ENCODE measurements at regions of chr14 and their contacts with region 1.

Region 1: GRCh38 chr14:68816262-68816942 is 23.5 kb upstream of the ZFP36L1 start:
- DNase-seq: peak; percentile 94
- ATAC-seq: peak; percentile 73
- H3K4me3 ChIP-seq: peak overlapping the region; percentile 51 to 80 (median 74)
- H3K4me3 Mint-ChIP-seq: peak overlapping the region; percentile 87
- H3K27ac ChIP-seq: peak overlapping the region; percentile 89 to 94
- H3K27ac Mint-ChIP-seq: peak overlapping the region; percentile 98
- H3K4me1 ChIP-seq: peaks cover 56 to 70% of the 10 kb centered on the region in 2 donors
- H3K4me1 Mint-ChIP-seq: peaks cover 82% of the 10 kb centered on the region
- H3K27me3 ChIP-seq: no peaks in the 10 kb centered on the region
- H3K27me3 Mint-ChIP-seq: no peaks in the 10 kb centered on the region
- CTCF ChIP-seq: peak; percentile 97

Region 2: DNA sequence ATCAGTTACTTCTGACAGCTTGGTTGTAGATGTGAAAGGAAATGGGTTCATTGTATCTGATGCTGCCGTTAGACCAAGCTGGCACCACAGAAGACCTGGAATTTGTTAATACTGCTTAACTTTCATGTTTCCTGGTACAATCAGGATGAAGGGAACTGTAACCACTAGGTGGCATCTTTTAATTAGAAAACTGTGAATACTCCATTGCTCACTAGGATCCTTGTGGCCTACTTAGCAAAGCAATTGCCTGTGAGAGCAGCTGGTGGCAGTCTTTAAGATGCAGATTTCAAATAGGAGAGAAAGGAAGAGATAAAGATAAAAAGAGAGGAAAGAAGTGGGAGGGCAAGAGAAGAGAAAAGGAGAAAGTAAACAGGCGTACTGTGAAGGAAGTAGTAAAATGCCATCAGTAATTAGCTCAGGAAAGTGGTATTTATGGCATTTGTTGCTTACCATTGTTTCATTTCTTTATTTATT is 882.4 kb before region 1 on chr14:
- CTCF ChIA-PET with region 1: interaction called, 32 read pairs
- POLR2A ChIA-PET with region 1: no interaction called
- intact Hi-C with region 1: loop called (anchors 2 kb)
- DNase-seq: peak; percentile 63
- ATAC-seq: peak; percentile 65
- H3K4me3 ChIP-seq: no peak overlapping the region
- H3K4me3 Mint-ChIP-seq: no peak overlapping the region
- H3K27ac ChIP-seq: no peak overlapping the region
- H3K27ac Mint-ChIP-seq: no peak overlapping the region
- H3K4me1 ChIP-seq: no peaks in the 10 kb centered on the region
- H3K4me1 Mint-ChIP-seq: peaks cover 2% of the 10 kb centered on the region
- H3K27me3 ChIP-seq: no peaks in the 10 kb centered on the region
- H3K27me3 Mint-ChIP-seq: no peaks in the 10 kb centered on the region
- CTCF ChIP-seq: peak; percentile 77

Region 3: GRCh38 chr14:68274725-68275124 is 541.7 kb before region 1 on chr14:
- CTCF ChIA-PET with region 1: interaction called, 30 read pairs
- POLR2A ChIA-PET with region 1: no interaction called
- intact Hi-C with region 1: loop called (anchors 5 kb)
- DNase-seq: peak; percentile 55
- ATAC-seq: no peak
- H3K4me3 ChIP-seq: peak overlapping the region in 1 of 5 experiments; percentile 12
- H3K4me3 Mint-ChIP-seq: peak overlapping the region; percentile 80
- H3K27ac ChIP-seq: peak overlapping the region; percentile 88 to 91
- H3K27ac Mint-ChIP-seq: peak overlapping the region; percentile 98
- H3K4me1 ChIP-seq: peaks cover 92 to 93% of the 10 kb centered on the region in 2 donors
- H3K4me1 Mint-ChIP-seq: peaks cover 87% of the 10 kb centered on the region
- H3K27me3 ChIP-seq: no peaks in the 10 kb centered on the region
- H3K27me3 Mint-ChIP-seq: no peaks in the 10 kb centered on the region
- CTCF ChIP-seq: peak; percentile 33

Region 4: DNA sequence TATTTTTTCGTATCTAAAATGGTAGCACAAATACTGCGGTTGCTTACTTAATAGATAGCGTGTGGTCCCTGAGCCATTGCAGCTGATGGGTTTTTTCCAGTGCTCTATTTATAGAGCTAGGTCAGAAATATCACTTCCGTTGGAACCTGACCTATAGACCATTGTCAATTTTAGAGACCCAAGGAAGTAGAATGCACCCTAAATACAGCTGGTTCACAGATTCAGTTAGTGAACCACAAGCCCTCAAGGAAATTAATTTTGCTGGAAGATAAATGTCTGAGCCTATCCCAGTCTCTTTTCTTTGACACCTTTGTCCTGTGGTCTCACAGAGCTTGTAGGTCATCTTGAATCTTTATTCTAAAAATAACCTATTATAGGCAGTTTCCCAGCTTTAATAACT is 414.5 kb before region 1 on chr14:
- CTCF ChIA-PET with region 1: interaction called, 9 read pairs
- POLR2A ChIA-PET with region 1: interaction called, 3 read pairs
- intact Hi-C with region 1: loop called (anchors 2 kb)
- DNase-seq: peak; percentile 71
- ATAC-seq: peak; percentile 59
- H3K4me3 ChIP-seq: peak overlapping the region in 1 of 5 experiments; percentile 57
- H3K4me3 Mint-ChIP-seq: peak overlapping the region; percentile 82
- H3K27ac ChIP-seq: peak overlapping the region; percentile 91 to 96
- H3K27ac Mint-ChIP-seq: peak overlapping the region; percentile 97
- H3K4me1 ChIP-seq: peaks cover 91 to 94% of the 10 kb centered on the region in 2 donors
- H3K4me1 Mint-ChIP-seq: peaks cover 90% of the 10 kb centered on the region
- H3K27me3 ChIP-seq: no peaks in the 10 kb centered on the region
- H3K27me3 Mint-ChIP-seq: no peaks in the 10 kb centered on the region
- CTCF ChIP-seq: no peak

Region 5: DNA sequence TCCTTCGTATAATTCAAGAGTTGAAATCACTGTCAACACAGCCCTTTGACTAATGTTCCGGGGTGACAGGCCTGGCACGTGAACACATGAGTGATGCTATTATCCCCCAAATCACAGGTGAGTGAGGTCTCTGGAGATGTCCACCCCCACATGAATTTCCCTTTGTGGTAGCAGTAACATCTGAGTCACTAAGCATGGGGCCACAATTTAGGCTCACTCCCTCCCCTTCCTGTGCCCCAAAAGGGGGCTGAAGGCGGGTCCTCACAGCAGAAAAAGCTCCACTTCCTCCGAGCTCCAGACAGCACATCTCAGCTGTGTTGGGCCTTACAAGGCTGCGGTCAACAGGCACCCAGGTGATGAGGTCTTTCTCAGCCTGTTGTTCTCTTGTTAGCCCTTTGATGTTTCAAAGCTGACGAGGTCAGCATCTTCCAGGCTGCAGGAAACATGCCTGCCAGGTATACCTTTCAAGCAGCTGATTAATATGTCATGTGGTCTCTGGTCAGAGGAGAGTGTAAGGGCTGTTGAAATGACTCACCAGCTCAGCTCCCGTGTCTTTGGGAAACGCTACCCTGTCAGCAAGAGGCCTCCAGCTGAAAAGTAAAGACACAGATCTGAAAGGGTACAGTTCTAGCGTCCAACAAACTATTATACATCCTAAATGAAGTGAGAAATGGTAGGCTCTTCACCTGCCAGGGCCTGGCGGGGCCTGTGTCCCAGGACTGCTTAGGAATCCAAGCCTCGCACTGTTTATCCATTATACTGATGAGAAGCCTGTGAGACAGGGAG is 130.8 kb before region 1 on chr14:
- CTCF ChIA-PET with region 1: interaction called, 36 read pairs
- POLR2A ChIA-PET with region 1: interaction called, 24 read pairs
- intact Hi-C with region 1: loop called (anchors 1 kb)
- DNase-seq: peak; percentile 95
- ATAC-seq: peak; percentile 81
- H3K4me3 ChIP-seq: peak overlapping the region in 2 of 5 experiments; percentile 18 to 45
- H3K4me3 Mint-ChIP-seq: peak overlapping the region; percentile 82
- H3K27ac ChIP-seq: peak overlapping the region; percentile 94 to 98
- H3K27ac Mint-ChIP-seq: peak overlapping the region; percentile 99
- H3K4me1 ChIP-seq: peaks cover 70 to 83% of the 10 kb centered on the region in 2 donors
- H3K4me1 Mint-ChIP-seq: peaks cover 90% of the 10 kb centered on the region
- H3K27me3 ChIP-seq: no peaks in the 10 kb centered on the region
- H3K27me3 Mint-ChIP-seq: no peaks in the 10 kb centered on the region
- CTCF ChIP-seq: no peak

Region 6: DNA sequence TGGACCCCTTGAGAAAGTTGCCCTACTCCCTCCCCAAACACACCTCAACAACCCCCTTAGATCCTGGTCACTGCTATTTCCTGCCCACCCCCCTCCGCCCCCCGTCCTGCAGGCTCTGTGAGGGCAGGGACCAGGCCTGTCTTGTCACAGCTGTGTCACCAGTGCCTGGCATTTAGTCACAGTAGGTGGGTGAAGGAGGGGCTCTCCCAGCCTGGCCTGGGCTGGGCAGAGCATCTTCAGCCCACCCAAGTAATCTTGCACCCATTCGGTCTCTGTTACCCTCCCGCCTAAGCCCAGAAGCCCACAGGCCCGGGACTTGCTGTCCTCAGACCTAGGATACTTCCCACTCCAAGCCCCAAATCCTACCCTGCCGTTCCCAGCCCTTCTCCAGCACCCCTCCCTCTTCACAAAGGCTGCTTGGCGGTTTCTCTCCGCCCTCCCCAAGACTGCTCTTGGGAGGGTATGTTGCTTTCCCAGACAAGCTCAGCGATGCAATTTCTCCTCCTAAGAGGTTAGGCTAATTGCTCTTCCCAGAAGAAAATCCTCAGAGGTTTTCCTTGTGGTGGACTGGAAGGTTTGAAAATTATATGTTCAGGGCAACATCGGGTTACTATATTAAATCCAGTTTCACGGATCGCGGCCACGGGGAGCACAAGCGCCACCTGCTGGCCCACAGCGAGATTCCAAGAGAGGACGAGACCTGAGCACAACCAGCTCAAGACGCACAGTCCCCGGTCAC is 27.2 kb after region 1 on chr14:
- CTCF ChIA-PET with region 1: interaction called, 72 read pairs
- POLR2A ChIA-PET with region 1: no interaction called
- intact Hi-C with region 1: loop called (anchors 2 kb)
- DNase-seq: peak; percentile 80
- ATAC-seq: peak; percentile 82
- H3K4me3 ChIP-seq: peak overlapping the region in 3 of 5 experiments; percentile 18 to 50 (median 24)
- H3K4me3 Mint-ChIP-seq: peak overlapping the region; percentile 62
- H3K27ac ChIP-seq: no peak overlapping the region
- H3K27ac Mint-ChIP-seq: no peak overlapping the region
- H3K4me1 ChIP-seq: peaks cover 6 to 7% of the 10 kb centered on the region in 2 donors
- H3K4me1 Mint-ChIP-seq: peaks cover 14% of the 10 kb centered on the region
- H3K27me3 ChIP-seq: no peaks in the 10 kb centered on the region
- H3K27me3 Mint-ChIP-seq: peaks cover 6% of the 10 kb centered on the region
- CTCF ChIP-seq: peak; percentile 93

Measured in B cell (primary cell).